Posterior vena cava (tissue), 2 donors: ENCODE measurements at regions of chr16 and their contacts with region 1.

Region 1: GRCh38 chr16:85305996-85306792 is 193.9 kb upstream of the CIBAR2 start:
- DNase-seq: peak; percentile 98

Region 2: DNA sequence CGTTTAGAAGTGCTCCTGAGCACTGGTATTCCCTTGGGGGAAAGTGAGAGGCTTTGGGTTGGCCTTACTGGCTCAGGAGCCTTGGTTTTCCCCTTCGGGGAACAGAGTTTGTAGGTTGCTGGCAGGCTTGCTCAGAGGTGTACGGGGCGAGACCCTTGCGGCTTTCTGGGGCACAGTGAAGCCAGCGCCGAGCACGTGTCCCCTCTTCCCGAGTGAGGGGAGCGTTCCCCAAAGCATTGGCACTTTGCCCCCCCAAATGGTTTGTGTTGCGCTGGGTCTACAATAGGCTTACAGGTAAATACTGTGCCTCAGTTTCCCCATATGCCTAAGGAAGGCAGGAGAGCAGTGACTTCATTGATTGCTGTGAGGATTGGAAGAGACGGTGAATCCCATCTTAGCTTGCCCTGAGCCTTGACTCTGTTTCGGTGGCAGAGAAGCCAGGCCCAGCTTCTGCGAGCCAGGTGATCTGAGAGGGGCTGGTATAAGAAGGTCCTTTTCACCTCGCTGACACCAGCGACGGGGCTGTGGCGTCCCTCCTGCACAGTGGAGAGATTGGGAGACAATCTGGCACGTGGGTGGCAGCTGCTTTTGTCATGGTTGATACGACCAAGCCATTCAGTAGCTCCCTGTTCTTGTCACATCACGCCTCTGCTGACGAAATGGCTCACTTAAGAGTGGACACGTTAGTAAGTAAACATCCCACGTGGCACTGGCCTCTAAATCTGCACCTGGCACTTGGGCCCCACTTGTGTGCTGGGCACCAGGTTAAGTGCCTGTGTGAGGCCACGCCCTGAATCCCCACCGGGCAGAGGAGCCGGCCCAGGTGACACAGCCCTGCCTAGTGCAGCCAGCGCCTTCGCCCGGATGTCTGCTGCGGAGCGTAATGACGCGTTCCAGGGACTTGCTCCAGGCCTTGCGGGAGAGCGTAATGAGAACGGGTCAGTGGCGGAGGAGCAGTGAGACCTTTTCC is 856.7 kb before region 1 on chr16:
- intact Hi-C with region 1: loop called in 1 of 2 experiments (anchors 5 kb)
- DNase-seq: peak; percentile 74